Psoas muscle (tissue), 8 donors: ENCODE measurements at regions of chr10 and their contacts with region 1.

Region 1: DNA sequence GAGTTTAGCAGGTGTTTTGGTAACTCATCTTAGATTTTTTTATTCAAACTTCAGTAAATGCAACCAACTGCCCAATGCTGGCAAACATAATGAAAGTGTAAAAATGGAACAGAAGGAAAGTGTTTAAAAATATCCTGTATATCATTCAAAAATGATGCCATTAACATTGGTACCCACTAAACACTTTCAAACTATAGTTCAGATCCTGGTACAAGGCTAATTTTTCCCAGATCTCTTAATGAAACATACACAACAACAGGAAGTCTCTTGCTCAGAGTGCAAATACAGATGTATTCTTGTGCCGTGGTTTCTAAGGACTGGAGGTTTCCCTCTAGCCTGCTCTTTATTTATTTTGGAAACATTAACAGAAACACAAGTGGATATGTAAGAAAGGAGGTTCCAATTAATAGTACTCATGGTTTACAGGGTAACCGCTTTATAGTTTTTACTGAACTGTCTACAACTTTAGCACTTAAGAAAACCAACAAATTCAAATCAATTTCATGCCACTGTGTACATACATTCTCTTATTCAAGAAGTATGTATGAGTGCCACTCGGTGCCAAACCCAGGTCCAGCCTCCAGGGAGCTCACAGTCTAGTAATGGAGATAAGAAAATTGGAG is 176.0 kb upstream of the AKR1E2 start:
- DNase-seq: no peak
- ATAC-seq: peak in 1 of 4 donors; percentile 27
- H3K4me3 ChIP-seq: no peak overlapping the region
- H3K27ac ChIP-seq: peak overlapping the region; percentile 63
- H3K4me1 ChIP-seq: peaks cover 21% of the 10 kb centered on the region
- H3K27me3 ChIP-seq: no peaks in the 10 kb centered on the region
- CTCF ChIP-seq: no peak

Region 2: DNA sequence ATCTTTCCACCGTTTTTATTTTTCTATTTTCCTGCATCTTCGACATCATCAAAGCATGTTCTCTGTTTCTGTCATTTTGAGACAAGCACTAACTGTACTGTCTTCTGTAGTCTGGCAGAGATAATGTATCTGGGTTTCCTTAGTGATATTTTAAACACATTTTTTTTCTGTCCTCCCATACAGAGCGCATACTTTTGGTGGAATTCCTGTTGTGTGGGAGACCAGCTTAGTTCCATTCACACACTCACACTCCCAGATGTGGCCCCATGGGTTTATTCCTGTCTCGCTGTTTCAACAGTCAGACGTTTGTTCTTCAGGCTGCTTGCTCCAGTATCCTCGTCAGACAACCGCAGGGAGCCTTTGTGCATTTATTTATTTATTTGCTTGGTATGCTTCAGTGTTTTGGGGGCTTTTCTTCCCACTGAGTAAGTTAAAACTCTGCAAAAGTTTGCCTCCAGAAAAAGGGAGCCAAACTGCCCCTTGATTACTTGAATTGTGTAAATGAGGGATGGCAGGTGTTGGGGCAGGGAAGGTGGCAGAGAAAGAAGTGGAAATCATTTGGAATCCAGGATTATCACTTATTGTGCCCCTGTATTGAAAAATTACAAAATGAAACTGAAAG is 408.2 kb before region 1 on chr10:
- intact Hi-C with region 1: loop called in 1 of 2 experiments (anchors 10 kb)
- DNase-seq: no peak
- ATAC-seq: peak; percentile 50 to 79 (median 64)
- H3K4me3 ChIP-seq: peak overlapping the region; percentile 48
- H3K27ac ChIP-seq: peak overlapping the region; percentile 73
- H3K4me1 ChIP-seq: peaks cover 33% of the 10 kb centered on the region
- H3K27me3 ChIP-seq: no peaks in the 10 kb centered on the region
- CTCF ChIP-seq: no peak